ENCODE measurements at regions of chr17 and their contacts with region 1.

Region 1: GRCh38 chr17:16537130-16537458 is 31.9 kb downstream of the ZNF287 start:
- DNase-seq: no peak
- ATAC-seq: no peak
- H3K4me3 ChIP-seq: no peak overlapping the region
- H3K27ac ChIP-seq: no peak overlapping the region
- H3K4me1 ChIP-seq: no peaks in the 10 kb centered on the region
- H3K27me3 ChIP-seq: no peaks in the 10 kb centered on the region

Region 2: DNA sequence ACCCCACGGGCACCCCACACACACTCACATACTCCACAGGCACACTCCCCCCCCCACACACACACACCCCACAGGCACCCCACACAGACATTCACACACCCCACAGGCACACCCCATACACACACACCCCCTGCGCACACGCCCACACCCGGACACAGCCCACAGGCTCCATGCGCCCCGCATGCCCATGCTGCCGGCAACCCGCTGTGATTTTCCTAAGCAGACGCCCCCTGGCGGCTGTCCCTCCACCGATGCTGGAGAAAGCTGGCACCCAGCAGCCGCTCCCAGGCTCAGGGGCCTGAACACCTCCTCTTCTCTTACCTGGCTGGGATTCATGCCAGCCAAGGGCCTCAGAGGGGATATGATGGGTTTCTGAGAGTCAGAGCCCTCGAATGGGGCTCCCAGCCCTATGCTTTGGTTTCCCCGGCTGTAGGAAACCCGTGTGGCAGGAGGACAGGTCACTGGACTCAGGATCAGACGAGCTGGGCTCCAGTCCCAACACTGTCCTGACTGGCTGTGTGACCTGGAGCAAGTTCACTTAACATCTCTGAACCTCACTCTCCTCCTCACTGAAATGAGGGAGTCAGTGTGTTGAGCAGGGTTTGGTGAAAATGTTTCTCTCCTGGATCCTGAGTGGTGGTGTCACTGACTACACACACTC is 454.4 kb after region 1 on chr17:
- intact Hi-C with region 1: loop called in 1 of 2 experiments (anchors 5 kb)
- DNase-seq: peak; percentile 89 to 96
- ATAC-seq: peak; percentile 72
- H3K4me3 ChIP-seq: no peak overlapping the region
- H3K27ac ChIP-seq: no peak overlapping the region
- H3K4me1 ChIP-seq: no peaks in the 10 kb centered on the region
- H3K27me3 ChIP-seq: no peaks in the 10 kb centered on the region